ENCODE measurements at regions of chr13 and their contacts with region 1.

Region 1: GRCh38 chr13:95191821-95192563 is 109.3 kb downstream of the ABCC4 start:
- DNase-seq: peak; percentile 45
- ATAC-seq: peak; percentile 99
- H3K4me3 ChIP-seq: no peak overlapping the region
- H3K27ac ChIP-seq: peak overlapping the region; percentile 20; the same call in 1 of the 2 replicates
- H3K4me1 ChIP-seq: peaks cover 4% of the 10 kb centered on the region; the same call in 1 of the 2 replicates
- H3K27me3 ChIP-seq: no peaks in the 10 kb centered on the region
- CTCF ChIP-seq: peak; percentile 94 to 98 (median 97)
- EP300 ChIP-seq: no peak
- POLR2A ChIP-seq: no peak
- RAD21 ChIP-seq: peak; percentile 92

Region 2: DNA sequence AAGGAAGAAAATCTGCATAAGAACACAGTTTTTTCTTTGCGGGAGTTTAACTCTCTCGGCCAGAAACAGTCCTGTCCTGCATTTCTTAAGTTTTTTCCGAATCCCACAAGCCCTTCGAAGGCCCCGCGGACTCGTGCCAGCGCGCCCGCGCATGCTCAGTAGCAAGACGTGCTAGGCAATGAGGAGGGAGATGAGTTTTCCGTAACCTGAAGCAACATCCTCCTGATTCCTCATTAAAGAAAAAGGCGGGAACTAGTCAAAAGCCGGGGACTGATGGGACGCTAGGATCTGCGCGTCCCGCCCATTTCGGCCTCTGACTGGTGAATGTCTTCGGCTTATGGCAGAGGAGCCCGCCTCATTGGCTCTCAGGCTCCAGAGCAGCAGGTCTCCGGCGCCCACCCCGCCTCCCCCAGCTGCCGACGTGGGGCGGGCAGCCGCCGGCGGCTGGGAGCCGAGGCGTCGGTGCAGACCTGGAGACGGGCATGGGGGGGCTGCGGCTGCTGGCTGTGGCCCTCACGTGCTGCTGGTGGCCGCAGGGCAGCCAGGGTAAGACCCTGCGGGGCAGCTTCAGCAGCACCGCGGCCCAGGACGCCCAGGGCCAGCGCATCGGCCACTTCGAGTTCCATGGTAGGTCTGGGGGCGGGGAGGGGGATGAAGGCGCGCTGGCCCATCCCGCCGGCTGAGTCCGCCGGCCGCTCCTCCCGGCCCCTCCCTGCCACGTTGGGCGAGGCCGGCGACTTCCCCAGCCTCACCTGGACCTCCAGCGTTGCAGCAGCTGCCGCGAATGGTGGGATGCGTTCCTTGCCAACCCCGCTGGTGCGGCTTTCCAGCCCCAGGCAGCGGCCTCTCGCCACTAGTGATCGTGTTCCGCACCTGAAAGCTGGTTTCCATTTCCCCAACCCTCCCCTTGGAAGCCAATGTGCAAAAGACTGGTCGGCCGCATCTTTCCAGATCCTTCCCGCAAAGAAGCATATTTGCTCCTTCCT is 590.3 kb before region 1 on chr13 and contains the start of gene GPR180:
- CTCF ChIA-PET with region 1: no interaction called
- POLR2A ChIA-PET with region 1: no interaction called
- RAD21 ChIA-PET with region 1: no interaction called
- SMC1A ChIA-PET with region 1: no interaction called
- in situ Hi-C with region 1: no loop called
- intact Hi-C with region 1: no loop called
- DNase-seq: peak; percentile 95
- ATAC-seq: peak; percentile 99
- H3K4me3 ChIP-seq: peak within 1 kb of the TSS; percentile 90
- H3K27ac ChIP-seq: peak within 1 kb of the TSS; percentile 80
- H3K4me1 ChIP-seq: peaks cover 6% of the 10 kb centered on the region; the same call in 1 of the 2 replicates
- H3K27me3 ChIP-seq: no peaks in the 10 kb centered on the region
- CTCF ChIP-seq: no peak
- EP300 ChIP-seq: no peak
- POLR2A ChIP-seq: peak; percentile 90
- RAD21 ChIP-seq: no peak
- polyA plus RNA-seq, gene GPR180: 1.6 to 1.8 TPM

Region 3: DNA sequence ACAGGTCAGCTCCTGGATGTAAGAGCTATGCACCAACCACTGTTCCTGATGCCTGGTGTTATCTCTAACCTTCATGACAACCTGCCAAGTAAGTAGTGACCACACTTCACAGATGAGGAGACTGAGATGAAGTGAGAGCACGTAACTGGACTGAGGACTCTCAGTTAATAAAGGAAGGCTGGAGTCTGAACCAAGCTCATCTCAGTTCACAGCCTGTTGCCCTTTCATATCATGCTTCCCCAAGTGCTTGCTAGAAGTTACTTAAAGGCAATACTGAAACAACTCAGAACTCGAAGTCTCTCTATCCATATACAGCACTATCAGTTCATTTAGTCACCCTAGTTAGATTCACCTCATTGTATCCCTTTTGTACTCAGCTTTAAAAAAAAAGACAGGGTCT is 10.4 kb before region 1 on chr13:
- CTCF ChIA-PET with region 1: interaction called, 25 read pairs
- POLR2A ChIA-PET with region 1: interaction called, 6 read pairs
- RAD21 ChIA-PET with region 1: interaction called, 6 read pairs
- SMC1A ChIA-PET with region 1: interaction called, 12 read pairs
- in situ Hi-C with region 1: no loop called
- intact Hi-C with region 1: no loop called
- DNase-seq: peak; percentile 40
- ATAC-seq: peak; percentile 85
- H3K4me3 ChIP-seq: no peak overlapping the region
- H3K27ac ChIP-seq: peak overlapping the region; percentile 57
- H3K4me1 ChIP-seq: peaks cover 30% of the 10 kb centered on the region
- H3K27me3 ChIP-seq: no peaks in the 10 kb centered on the region
- CTCF ChIP-seq: no peak
- EP300 ChIP-seq: no peak
- POLR2A ChIP-seq: no peak
- RAD21 ChIP-seq: no peak

Region 4: GRCh38 chr13:95256086-95256485 is 64.1 kb after region 1 on chr13:
- CTCF ChIA-PET with region 1: interaction called, 11 read pairs
- POLR2A ChIA-PET with region 1: interaction called, 3 read pairs
- RAD21 ChIA-PET with region 1: interaction called, 7 read pairs
- SMC1A ChIA-PET with region 1: interaction called, 8 read pairs
- in situ Hi-C with region 1: no loop called
- intact Hi-C with region 1: loop called (anchors 5 kb)
- DNase-seq: no peak
- ATAC-seq: no peak
- H3K4me3 ChIP-seq: no peak overlapping the region
- H3K27ac ChIP-seq: 0 out of 2 replicates have a peak overlapping the region, but pooled peaks have one; percentile 22
- H3K4me1 ChIP-seq: peaks cover 64% of the 10 kb centered on the region
- H3K27me3 ChIP-seq: no peaks in the 10 kb centered on the region
- CTCF ChIP-seq: no peak
- EP300 ChIP-seq: no peak
- POLR2A ChIP-seq: no peak
- RAD21 ChIP-seq: no peak

Region 5: GRCh38 chr13:95301183-95301967 is 109.4 kb after region 1 on chr13 and contains the start of gene ABCC4:
- CTCF ChIA-PET with region 1: interaction called, 198 read pairs
- POLR2A ChIA-PET with region 1: interaction called, 11 read pairs
- RAD21 ChIA-PET with region 1: interaction called, 113 read pairs
- SMC1A ChIA-PET with region 1: interaction called, 157 read pairs
- in situ Hi-C with region 1: no loop called
- intact Hi-C with region 1: loop called (anchors 1 kb)
- DNase-seq: no peak
- ATAC-seq: peak; percentile 86
- H3K4me3 ChIP-seq: peak within 1 kb of the TSS; percentile 94
- H3K27ac ChIP-seq: peak within 1 kb of the TSS; percentile 89
- H3K4me1 ChIP-seq: peaks cover 14% of the 10 kb centered on the region
- H3K27me3 ChIP-seq: no peaks in the 10 kb centered on the region
- CTCF ChIP-seq: no peak; a peak in 1 of 6 replicates
- EP300 ChIP-seq: no peak
- POLR2A ChIP-seq: peak; percentile 88
- RAD21 ChIP-seq: 0 out of 2 replicates have a peak, but pooled peaks have one; percentile 1
- polyA plus RNA-seq, gene ABCC4: 7.2 to 8.0 TPM

Region 6: DNA sequence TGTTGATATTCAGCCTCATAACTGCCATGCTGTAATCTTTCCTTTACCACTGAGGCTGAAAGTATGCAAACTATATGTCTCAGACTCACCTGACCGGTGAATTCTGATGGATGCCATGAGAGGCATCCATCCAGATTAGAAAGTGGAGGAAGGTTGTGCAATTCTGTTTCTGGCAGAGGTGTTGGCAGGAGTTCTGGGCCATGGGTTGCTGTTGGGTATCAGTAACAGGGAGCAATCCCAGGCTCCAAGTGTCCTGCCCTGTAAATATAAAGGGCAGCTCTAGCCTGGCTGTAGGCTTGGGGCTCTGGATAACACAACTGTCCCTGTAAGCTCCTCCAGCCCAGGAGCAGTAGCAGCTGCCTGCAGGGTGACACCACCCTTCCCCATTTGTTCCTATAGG is 186.6 kb after region 1 on chr13:
- CTCF ChIA-PET with region 1: interaction called, 340 read pairs
- POLR2A ChIA-PET with region 1: interaction called, 3 read pairs
- RAD21 ChIA-PET with region 1: interaction called, 222 read pairs
- SMC1A ChIA-PET with region 1: interaction called, 229 read pairs
- in situ Hi-C with region 1: no loop called
- intact Hi-C with region 1: loop called (anchors 1 kb)
- DNase-seq: no peak
- ATAC-seq: no peak
- H3K4me3 ChIP-seq: no peak overlapping the region
- H3K27ac ChIP-seq: no peak overlapping the region
- H3K4me1 ChIP-seq: peaks cover 16% of the 10 kb centered on the region
- H3K27me3 ChIP-seq: no peaks in the 10 kb centered on the region
- CTCF ChIP-seq: no peak
- EP300 ChIP-seq: no peak
- POLR2A ChIP-seq: no peak
- RAD21 ChIP-seq: no peak

Region 7: DNA sequence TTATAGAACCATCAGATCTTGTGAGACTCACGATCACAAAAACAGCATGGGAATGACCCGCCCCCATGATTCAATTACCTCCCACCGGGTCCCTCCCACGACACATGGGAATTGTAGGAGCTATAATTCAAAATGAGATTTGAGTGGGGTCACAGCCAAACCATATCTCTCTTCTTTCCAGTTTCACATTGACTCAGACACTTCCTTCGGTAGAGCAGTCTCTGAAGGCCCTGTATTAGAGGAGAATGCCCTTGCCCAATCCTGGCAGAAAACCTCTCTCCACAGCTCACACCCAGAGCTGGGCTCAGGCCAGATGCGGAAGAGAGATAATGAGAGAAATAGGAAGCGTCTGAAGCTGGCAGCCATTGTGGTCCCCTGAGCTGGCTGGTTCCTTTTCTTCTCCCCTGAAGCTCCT is 288.1 kb after region 1 on chr13:
- CTCF ChIA-PET with region 1: interaction called, 25 read pairs
- POLR2A ChIA-PET with region 1: no interaction called
- RAD21 ChIA-PET with region 1: interaction called, 16 read pairs
- SMC1A ChIA-PET with region 1: interaction called, 7 read pairs
- in situ Hi-C with region 1: loop called (anchors 5 kb)
- intact Hi-C with region 1: loop called (anchors 1 kb)
- DNase-seq: peak; percentile 71
- ATAC-seq: peak; percentile 75
- H3K4me3 ChIP-seq: no peak overlapping the region
- H3K27ac ChIP-seq: peak overlapping the region; percentile 54
- H3K4me1 ChIP-seq: peaks cover 21% of the 10 kb centered on the region
- H3K27me3 ChIP-seq: no peaks in the 10 kb centered on the region
- CTCF ChIP-seq: no peak
- EP300 ChIP-seq: no peak
- POLR2A ChIP-seq: no peak
- RAD21 ChIP-seq: no peak

Measured in GM12878 (cell line).